GM12878 (cell line): ENCODE measurements at regions of chr19 and their contacts with region 1.

Region 1: GRCh38 chr19:38877781-38878574 is at the start of gene RINL:
- DNase-seq: no peak
- ATAC-seq: peak; percentile 97
- H3K4me3 ChIP-seq: peak within 1 kb of the TSS; percentile 73
- H3K27ac ChIP-seq: peak within 1 kb of the TSS; percentile 95
- H3K4me1 ChIP-seq: peaks cover 7% of the 10 kb centered on the region
- H3K27me3 ChIP-seq: no peaks in the 10 kb centered on the region
- CTCF ChIP-seq: no peak
- EP300 ChIP-seq: no peak
- POLR2A ChIP-seq: peak; percentile 82
- RAD21 ChIP-seq: no peak
- polyA plus RNA-seq, gene RINL: 14.5 to 16.3 TPM

Region 2: GRCh38 chr19:38831142-38831605 is 46.8 kb before region 1 on chr19:
- CTCF ChIA-PET with region 1: interaction called, 3 read pairs
- POLR2A ChIA-PET with region 1: interaction called, 7 read pairs
- RAD21 ChIA-PET with region 1: interaction called, 3 read pairs
- SMC1A ChIA-PET with region 1: interaction called, 4 read pairs
- in situ Hi-C with region 1: no loop called
- intact Hi-C with region 1: loop called (anchors 10 kb)
- DNase-seq: no peak
- ATAC-seq: peak; percentile 91
- H3K4me3 ChIP-seq: peak overlapping the region; percentile 75
- H3K27ac ChIP-seq: peak overlapping the region; percentile 95
- H3K4me1 ChIP-seq: no peaks in the 10 kb centered on the region; the same call in 1 of the 2 replicates
- H3K27me3 ChIP-seq: no peaks in the 10 kb centered on the region
- CTCF ChIP-seq: no peak
- EP300 ChIP-seq: no peak
- POLR2A ChIP-seq: no peak
- RAD21 ChIP-seq: no peak

Region 3: GRCh38 chr19:38856813-38857212 is 21.2 kb before region 1 on chr19:
- CTCF ChIA-PET with region 1: no interaction called
- POLR2A ChIA-PET with region 1: interaction called, 10 read pairs
- RAD21 ChIA-PET with region 1: interaction called, 7 read pairs
- SMC1A ChIA-PET with region 1: interaction called, 4 read pairs
- in situ Hi-C with region 1: no loop called
- intact Hi-C with region 1: no loop called
- DNase-seq: no peak
- ATAC-seq: no peak
- H3K4me3 ChIP-seq: no peak overlapping the region
- H3K27ac ChIP-seq: no peak overlapping the region
- H3K4me1 ChIP-seq: peaks cover 25% of the 10 kb centered on the region
- H3K27me3 ChIP-seq: no peaks in the 10 kb centered on the region
- CTCF ChIP-seq: no peak
- EP300 ChIP-seq: no peak
- POLR2A ChIP-seq: no peak
- RAD21 ChIP-seq: no peak

Region 4: DNA sequence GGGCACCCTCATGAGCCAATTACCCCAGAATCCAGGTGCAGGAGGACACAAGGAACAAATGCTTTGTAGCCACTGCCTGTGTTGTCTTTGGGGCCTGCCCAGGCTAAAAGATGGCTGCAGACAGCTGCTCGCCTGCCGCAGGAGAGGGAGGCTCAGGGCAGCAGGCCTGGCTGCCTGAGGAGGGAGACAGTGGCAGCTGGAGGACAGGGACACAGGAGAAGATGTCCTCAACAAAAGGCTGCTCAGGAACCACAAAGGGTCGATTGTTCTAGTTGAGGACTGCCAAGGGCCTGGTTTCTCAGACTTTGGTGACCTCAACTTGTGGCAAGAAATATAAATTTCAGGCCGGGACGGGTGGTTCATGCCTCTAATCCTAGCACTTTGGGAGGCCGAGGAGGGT is 13.8 kb after region 1 on chr19:
- CTCF ChIA-PET with region 1: interaction called, 62 read pairs
- POLR2A ChIA-PET with region 1: interaction called, 3 read pairs
- RAD21 ChIA-PET with region 1: interaction called, 8 read pairs
- SMC1A ChIA-PET with region 1: interaction called, 9 read pairs
- in situ Hi-C with region 1: no loop called
- intact Hi-C with region 1: no loop called
- DNase-seq: no peak
- ATAC-seq: no peak
- H3K4me3 ChIP-seq: no peak overlapping the region
- H3K27ac ChIP-seq: no peak overlapping the region
- H3K4me1 ChIP-seq: no peaks in the 10 kb centered on the region
- H3K27me3 ChIP-seq: no peaks in the 10 kb centered on the region
- CTCF ChIP-seq: no peak
- EP300 ChIP-seq: no peak
- POLR2A ChIP-seq: no peak
- RAD21 ChIP-seq: no peak